Naive thymus-derived CD4-positive, alpha-beta T cell (primary cell): ENCODE measurements at regions of chr5 and their contacts with region 1.

Region 1: DNA sequence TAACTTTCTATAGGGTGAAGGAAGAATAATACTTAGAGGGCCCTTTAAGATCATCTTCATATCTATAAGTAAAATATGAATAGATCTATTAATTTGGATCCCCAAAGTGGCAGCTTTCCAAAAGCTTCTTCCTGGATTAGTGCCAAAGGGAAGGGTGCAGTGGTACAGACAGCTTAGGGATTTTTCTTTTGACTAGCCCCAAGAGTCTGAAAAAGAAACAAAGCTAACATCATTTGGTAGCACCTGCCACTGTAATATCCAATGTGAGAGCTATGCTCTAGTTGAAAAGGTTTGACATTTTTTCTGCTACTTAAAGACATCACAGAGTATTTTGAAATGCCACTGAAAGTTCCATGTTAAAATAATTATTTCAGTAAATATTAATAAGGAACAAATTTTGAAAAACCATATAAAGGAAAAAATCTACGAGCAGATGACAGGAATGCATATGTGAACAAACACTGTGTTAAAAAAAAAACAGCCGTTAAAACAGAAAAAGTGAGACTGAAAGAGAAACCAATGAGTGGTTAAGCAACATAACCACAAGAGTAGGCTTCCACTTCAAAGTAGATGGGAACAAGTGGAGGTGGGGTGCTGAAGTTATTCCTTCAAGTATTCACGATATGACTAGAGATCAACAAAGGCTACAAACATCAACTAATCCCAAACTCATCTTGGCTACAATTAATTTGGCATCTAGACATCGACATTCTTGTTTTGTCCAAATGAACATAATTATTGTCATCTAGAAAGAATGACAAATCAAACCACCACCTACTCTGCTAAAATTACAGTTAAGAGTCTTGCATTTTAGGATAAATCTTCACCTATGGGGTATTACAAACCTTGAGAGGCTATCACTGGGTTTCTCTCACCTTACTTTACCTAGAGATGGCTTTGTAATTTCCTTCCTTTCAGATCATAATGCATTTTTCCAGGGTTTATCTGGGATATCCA is 137.5 kb downstream of the CPLANE1 start:
- DNase-seq: peak in 7 of 9 donors; percentile 42 to 73 (median 62)
- ATAC-seq: peak; percentile 86
- H3K4me3 ChIP-seq: peak overlapping the region; percentile 19
- H3K4me3 Mint-ChIP-seq: peak overlapping the region; percentile 42 to 83 (median 72)
- H3K27ac ChIP-seq: peak overlapping the region; percentile 47
- H3K27ac Mint-ChIP-seq: peak overlapping the region; percentile 6 to 88 (median 48)
- H3K4me1 ChIP-seq: peaks cover 14 to 30% of the 10 kb centered on the region in 2 donors
- H3K4me1 Mint-ChIP-seq: peaks cover 33 to 50% (median 43%) of the 10 kb centered on the region in 7 donors
- H3K27me3 ChIP-seq: no peaks in the 10 kb centered on the region
- H3K27me3 Mint-ChIP-seq: no peaks in the 10 kb centered on the region

Region 2: DNA sequence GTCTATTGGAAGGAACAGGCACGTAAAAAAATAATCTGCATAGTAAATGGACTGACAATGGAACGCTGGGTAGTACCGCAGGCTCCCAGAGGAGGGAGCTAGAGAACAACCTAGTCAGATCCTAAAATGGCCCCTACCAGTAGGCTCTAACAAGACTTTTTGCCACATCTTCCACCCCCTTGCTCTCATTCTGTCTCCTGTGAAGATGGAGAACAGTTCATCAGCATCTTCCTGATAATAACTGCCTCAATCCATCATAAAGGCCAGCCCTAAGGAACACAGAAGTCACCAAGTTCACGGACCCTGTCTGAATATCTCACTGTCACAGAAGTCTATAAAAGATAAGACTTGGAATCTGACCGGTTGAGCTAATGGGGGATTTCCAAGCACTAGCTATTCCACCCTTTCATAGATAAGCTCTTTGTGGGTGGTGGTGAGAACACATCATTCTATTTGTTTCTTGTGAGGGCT is 371.9 kb before region 1 on chr5:
- CTCF ChIA-PET with region 1: no interaction called
- POLR2A ChIA-PET with region 1: no interaction called
- intact Hi-C with region 1: loop called in 1 of 2 experiments (anchors 10 kb)
- DNase-seq: peak; percentile 46 to 73 (median 66)
- ATAC-seq: peak; percentile 91
- H3K4me3 ChIP-seq: no peak overlapping the region
- H3K4me3 Mint-ChIP-seq: no peak overlapping the region
- H3K27ac ChIP-seq: no peak overlapping the region
- H3K27ac Mint-ChIP-seq: peak overlapping the region in 1 of 9 donors; percentile 47
- H3K4me1 ChIP-seq: peaks cover 0 to 4% of the 10 kb centered on the region in 2 donors
- H3K4me1 Mint-ChIP-seq: peaks cover 8 to 13% (median 10%) of the 10 kb centered on the region in 7 donors
- H3K27me3 ChIP-seq: no peaks in the 10 kb centered on the region
- H3K27me3 Mint-ChIP-seq: peaks cover 29 to 44% (median 36%) of the 10 kb centered on the region in 5 donors

Region 3: DNA sequence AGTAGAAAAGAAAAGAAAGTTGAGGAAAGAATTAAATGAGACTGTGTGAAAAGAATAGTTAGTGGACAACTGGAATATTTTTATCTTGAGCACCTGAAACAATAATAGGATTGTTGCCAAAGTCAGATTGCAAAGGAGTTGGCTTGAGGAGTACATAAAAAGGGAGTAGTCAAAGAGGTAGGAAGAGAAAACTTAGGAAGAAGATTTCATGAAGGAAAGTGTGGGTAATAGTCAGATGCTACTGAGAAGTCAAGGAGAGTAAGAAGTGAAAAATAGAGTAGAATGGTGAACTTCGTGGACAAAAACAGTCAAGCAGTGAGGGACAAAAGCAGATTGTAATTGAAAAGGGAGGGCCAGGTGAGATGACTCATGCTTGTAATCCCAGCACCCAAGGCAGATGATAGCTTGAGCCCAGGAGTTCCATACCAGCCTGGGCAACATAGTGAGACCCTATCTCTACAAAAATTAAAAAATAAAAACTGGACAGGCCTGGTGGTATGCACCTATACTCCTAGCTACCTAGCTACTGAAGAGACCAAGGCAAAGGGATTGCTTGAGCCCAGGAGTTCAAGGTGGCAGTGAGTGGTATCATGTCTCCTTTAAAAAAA is 56.2 kb before region 1 on chr5:
- CTCF ChIA-PET with region 1: no interaction called
- POLR2A ChIA-PET with region 1: no interaction called
- intact Hi-C with region 1: loop called in 1 of 2 experiments (anchors 5 kb)
- DNase-seq: no peak
- ATAC-seq: no peak
- H3K4me3 ChIP-seq: no peak overlapping the region
- H3K4me3 Mint-ChIP-seq: no peak overlapping the region
- H3K27ac ChIP-seq: no peak overlapping the region
- H3K27ac Mint-ChIP-seq: peak overlapping the region in 8 of 9 donors; percentile 4 to 44 (median 16)
- H3K4me1 ChIP-seq: no peaks in the 10 kb centered on the region
- H3K4me1 Mint-ChIP-seq: peaks cover 0 to 14% (median 0%) of the 10 kb centered on the region in 7 donors
- H3K27me3 ChIP-seq: no peaks in the 10 kb centered on the region
- H3K27me3 Mint-ChIP-seq: no peaks in the 10 kb centered on the region

Region 4: DNA sequence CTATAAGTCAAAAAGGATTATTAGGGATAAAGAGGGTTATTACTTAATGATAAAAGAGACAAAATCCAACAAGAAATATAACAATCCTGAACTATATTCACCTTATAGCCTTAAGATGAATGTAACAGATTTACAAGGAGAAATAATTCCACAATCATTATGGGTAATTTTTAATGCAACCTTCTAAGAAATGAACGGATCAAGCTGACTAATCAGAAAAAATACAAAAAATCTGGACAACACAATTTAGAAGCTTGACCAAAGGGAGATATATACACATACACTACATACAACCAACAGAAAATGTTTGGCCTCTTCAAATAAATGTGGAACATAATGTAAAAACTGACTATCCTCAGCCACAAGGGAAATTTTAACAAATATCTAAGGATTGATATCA is 35.2 kb after region 1 on chr5:
- CTCF ChIA-PET with region 1: no interaction called
- POLR2A ChIA-PET with region 1: no interaction called
- intact Hi-C with region 1: loop called in 1 of 2 experiments (anchors 5 kb)
- DNase-seq: no peak
- ATAC-seq: no peak
- H3K4me3 ChIP-seq: no peak overlapping the region
- H3K4me3 Mint-ChIP-seq: no peak overlapping the region
- H3K27ac ChIP-seq: no peak overlapping the region
- H3K27ac Mint-ChIP-seq: no peak overlapping the region
- H3K4me1 ChIP-seq: no peaks in the 10 kb centered on the region
- H3K4me1 Mint-ChIP-seq: peaks cover 0 to 3% (median 0%) of the 10 kb centered on the region in 7 donors
- H3K27me3 ChIP-seq: no peaks in the 10 kb centered on the region
- H3K27me3 Mint-ChIP-seq: no peaks in the 10 kb centered on the region

Region 5: DNA sequence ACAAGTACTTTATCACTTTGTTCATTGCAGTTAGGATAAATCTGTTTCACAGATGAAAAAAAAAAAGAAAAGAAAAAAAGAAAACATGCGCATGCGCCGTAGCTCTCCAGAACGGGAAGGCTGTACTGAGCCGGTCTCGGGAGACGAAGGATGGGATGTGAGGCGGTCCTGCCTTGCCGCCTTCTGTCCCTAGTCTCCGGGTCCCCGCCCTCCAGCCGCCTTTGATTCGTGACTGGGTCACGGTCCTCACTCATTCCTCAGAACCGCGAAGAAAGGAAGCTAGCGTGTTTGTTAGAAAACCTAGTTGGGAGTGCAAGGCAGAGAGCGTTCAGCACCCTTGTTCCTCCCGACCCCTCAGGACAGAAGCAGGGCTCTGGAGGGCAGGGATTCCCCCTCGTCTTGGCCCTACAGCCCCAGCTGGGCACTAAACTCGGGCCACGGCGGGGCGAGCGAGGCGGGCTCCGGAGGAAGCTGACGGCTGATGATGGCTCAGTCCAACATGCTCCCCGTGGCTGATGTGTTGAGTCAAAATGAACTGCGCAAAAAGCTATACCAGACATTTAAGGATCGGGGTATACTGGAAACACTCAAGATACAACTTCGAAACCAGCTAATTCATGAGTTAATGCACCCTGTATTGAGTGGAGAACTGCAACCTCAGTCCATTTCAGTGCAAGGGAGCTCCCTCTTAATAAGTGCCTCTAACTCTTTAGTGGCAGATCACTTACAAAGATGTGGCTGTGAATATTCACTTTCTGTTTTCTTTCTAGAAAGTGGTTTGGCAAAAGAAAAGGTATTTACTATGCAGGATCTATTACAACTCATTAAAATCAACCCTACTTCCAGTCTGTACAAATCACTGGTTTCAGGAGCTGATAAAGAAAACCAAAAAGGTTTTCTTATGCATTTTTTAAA is 97.4 kb after region 1 on chr5:
- CTCF ChIA-PET with region 1: no interaction called
- POLR2A ChIA-PET with region 1: no interaction called
- intact Hi-C with region 1: no loop called
- DNase-seq: peak in 2 of 9 donors; percentile 15 to 20
- ATAC-seq: peak; percentile 50
- H3K4me3 ChIP-seq: peak overlapping the region; percentile 46
- H3K4me3 Mint-ChIP-seq: peak overlapping the region; percentile 62 to 87 (median 80)
- H3K27ac ChIP-seq: peak overlapping the region; percentile 44
- H3K27ac Mint-ChIP-seq: peak overlapping the region in 7 of 9 donors; percentile 31 to 88 (median 65)
- H3K4me1 ChIP-seq: peaks cover 0 to 1% of the 10 kb centered on the region in 2 donors
- H3K4me1 Mint-ChIP-seq: peaks cover 0 to 11% (median 0%) of the 10 kb centered on the region in 7 donors
- H3K27me3 ChIP-seq: no peaks in the 10 kb centered on the region
- H3K27me3 Mint-ChIP-seq: no peaks in the 10 kb centered on the region

Region 6: DNA sequence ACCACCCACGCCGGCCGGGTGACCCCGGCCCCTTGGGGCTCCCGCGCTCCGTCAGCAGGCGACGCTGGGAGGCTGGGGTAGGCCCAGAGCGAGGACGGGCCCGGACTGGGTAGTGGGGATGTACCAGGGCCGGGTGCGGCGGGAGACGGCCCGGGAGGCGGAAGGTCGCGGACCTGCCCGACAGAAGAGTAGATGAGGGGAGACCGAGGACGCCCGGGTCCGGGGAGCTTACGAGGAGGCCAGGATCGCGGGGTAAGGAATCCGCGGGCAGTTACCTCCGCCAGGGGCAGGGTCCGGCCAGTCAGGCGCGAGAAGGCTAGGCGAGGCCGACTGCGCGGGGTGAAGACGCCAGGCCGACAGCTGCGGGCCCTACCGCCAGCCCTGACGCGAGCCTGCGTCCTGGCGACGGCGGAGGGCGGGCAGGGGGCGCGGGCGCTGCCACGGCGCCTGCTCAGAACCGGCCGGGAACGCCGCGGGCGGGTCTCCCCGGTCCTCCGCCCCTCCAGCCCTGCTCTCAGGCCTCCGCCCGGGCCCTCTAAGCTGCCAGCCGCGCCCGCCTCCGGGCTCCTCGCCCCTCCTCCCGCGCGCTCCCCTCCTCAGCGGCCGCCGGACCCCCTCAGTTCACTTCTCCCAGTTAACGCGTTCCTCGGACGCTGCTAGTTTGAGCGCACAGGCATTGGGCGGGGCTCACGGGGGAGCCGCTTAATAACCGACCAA is 137.4 kb after region 1 on chr5 and contains the start of gene CPLANE1:
- CTCF ChIA-PET with region 1: no interaction called
- POLR2A ChIA-PET with region 1: no interaction called
- intact Hi-C with region 1: loop called in 1 of 2 experiments (anchors 5 kb)
- DNase-seq: peak; percentile 21 to 73 (median 53)
- ATAC-seq: peak; percentile 87
- H3K4me3 ChIP-seq: peak within 1 kb of the TSS; percentile 75
- H3K4me3 Mint-ChIP-seq: peak within 1 kb of the TSS; percentile 84 to 94 (median 90)
- H3K27ac ChIP-seq: peak within 1 kb of the TSS; percentile 77
- H3K27ac Mint-ChIP-seq: peak within 1 kb of the TSS; percentile 77 to 92 (median 86)
- H3K4me1 ChIP-seq: peaks cover 0 to 6% of the 10 kb centered on the region in 2 donors
- H3K4me1 Mint-ChIP-seq: peaks cover 5 to 30% (median 17%) of the 10 kb centered on the region in 7 donors
- H3K27me3 ChIP-seq: no peaks in the 10 kb centered on the region
- H3K27me3 Mint-ChIP-seq: no peaks in the 10 kb centered on the region
- total RNA-seq, gene CPLANE1: 8.0 to 14.7 (median 10.4) TPM